ENCODE measurements at regions of chr12 and their contacts with region 1.

Region 1: DNA sequence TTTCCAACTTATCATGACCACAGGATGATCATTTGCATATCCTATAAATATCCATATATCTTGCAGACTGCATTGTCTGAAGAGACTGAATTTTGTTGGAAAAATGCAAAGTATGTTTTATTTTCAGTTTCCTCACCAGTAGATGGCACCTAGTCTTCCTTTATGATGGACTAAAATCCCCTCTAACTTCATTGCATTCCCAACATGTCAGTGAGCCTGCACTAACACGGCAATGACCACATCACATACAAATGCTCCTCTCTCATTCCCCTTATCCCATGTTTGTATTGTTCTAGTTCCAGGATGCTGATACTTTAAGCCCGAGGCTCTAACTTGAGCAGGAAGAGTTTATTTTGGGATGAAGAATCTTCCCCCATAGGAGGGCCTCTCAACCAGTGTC is 24.7 kb upstream of the MYBPC1 start:
- H3K4me3 Mint-ChIP-seq: no peak overlapping the region
- H3K27ac Mint-ChIP-seq: no peak overlapping the region
- H3K4me1 Mint-ChIP-seq: peaks cover 16% of the 10 kb centered on the region
- H3K27me3 Mint-ChIP-seq: no peaks in the 10 kb centered on the region

Region 2: GRCh38 chr12:101759396-101760047 is 189.5 kb after region 1 on chr12:
- intact Hi-C with region 1: loop called (anchors 5 kb)
- H3K4me3 Mint-ChIP-seq: no peak overlapping the region
- H3K27ac Mint-ChIP-seq: no peak overlapping the region
- H3K4me1 Mint-ChIP-seq: peaks cover 18% of the 10 kb centered on the region
- H3K27me3 Mint-ChIP-seq: no peaks in the 10 kb centered on the region

Region 3: DNA sequence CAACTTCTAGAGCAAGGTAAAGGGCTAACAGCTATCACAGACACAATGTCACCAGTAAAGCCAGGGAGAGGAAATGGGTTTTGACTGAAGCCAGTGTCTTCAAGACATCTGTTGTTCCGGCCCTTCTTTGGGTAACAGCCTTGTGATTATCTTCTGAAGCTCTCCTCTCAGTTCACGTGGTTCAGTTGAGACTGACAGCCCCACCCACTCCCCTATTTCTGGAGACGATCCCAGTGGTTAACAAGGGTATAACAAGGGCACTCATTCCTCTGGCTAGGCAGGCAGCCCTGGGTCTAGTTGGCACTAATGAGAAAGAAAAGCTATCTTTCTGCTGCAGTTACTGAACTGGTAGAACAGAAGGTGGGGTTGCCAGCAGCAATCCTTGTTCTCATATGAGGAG is 253.8 kb after region 1 on chr12:
- intact Hi-C with region 1: loop called (anchors 10 kb)
- H3K4me3 Mint-ChIP-seq: no peak overlapping the region
- H3K27ac Mint-ChIP-seq: peak overlapping the region; percentile 50
- H3K4me1 Mint-ChIP-seq: peaks cover 59% of the 10 kb centered on the region
- H3K27me3 Mint-ChIP-seq: no peaks in the 10 kb centered on the region